ENCODE measurements at regions of chr17 and their contacts with region 1.

Region 1: GRCh38 chr17:60525685-60526514 is at the start of gene APPBP2:
- DNase-seq: peak; percentile 88 to 90
- H3K4me3 ChIP-seq: peak within 1 kb of the TSS; percentile 87
- H3K4me3 Mint-ChIP-seq: peak within 1 kb of the TSS; percentile 96
- H3K27ac Mint-ChIP-seq: peak within 1 kb of the TSS; percentile 96
- H3K4me1 ChIP-seq: peaks cover 11% of the 10 kb centered on the region
- H3K4me1 Mint-ChIP-seq: no peaks in the 10 kb centered on the region
- H3K27me3 ChIP-seq: no peaks in the 10 kb centered on the region
- H3K27me3 Mint-ChIP-seq: no peaks in the 10 kb centered on the region
- CTCF ChIP-seq: no peak
- total RNA-seq, gene APPBP2: 25.3 and 29.8 TPM in 2 replicates

Region 2: GRCh38 chr17:60579090-60579489 is 53.2 kb after region 1 on chr17:
- CTCF ChIA-PET with region 1: no interaction called
- POLR2A ChIA-PET with region 1: no interaction called
- intact Hi-C with region 1: no loop called
- DNase-seq: no peak
- H3K4me3 ChIP-seq: no peak overlapping the region
- H3K4me3 Mint-ChIP-seq: no peak overlapping the region
- H3K27ac Mint-ChIP-seq: no peak overlapping the region
- H3K4me1 ChIP-seq: 0 out of 2 replicates have a peak, but pooled peaks cover under 1% of the 10 kb centered on the region
- H3K4me1 Mint-ChIP-seq: no peaks in the 10 kb centered on the region
- H3K27me3 ChIP-seq: no peaks in the 10 kb centered on the region
- H3K27me3 Mint-ChIP-seq: no peaks in the 10 kb centered on the region
- CTCF ChIP-seq: no peak

Region 3: GRCh38 chr17:60641810-60642220 is 115.9 kb after region 1 on chr17:
- CTCF ChIA-PET with region 1: interaction called, 13 read pairs
- POLR2A ChIA-PET with region 1: no interaction called
- intact Hi-C with region 1: no loop called
- DNase-seq: peak; percentile 76 to 79
- H3K4me3 ChIP-seq: no peak overlapping the region
- H3K4me3 Mint-ChIP-seq: no peak overlapping the region
- H3K27ac Mint-ChIP-seq: no peak overlapping the region
- H3K4me1 ChIP-seq: peaks cover 5% of the 10 kb centered on the region; the same call in 1 of the 2 replicates
- H3K4me1 Mint-ChIP-seq: no peaks in the 10 kb centered on the region
- H3K27me3 ChIP-seq: no peaks in the 10 kb centered on the region
- H3K27me3 Mint-ChIP-seq: no peaks in the 10 kb centered on the region
- CTCF ChIP-seq: peak; percentile 85

Region 4: GRCh38 chr17:60704170-60704569 is 178.3 kb after region 1 on chr17:
- CTCF ChIA-PET with region 1: interaction called, 10 read pairs
- POLR2A ChIA-PET with region 1: no interaction called
- intact Hi-C with region 1: no loop called
- DNase-seq: peak in 1 of 2 experiments; percentile 2
- H3K4me3 ChIP-seq: no peak overlapping the region
- H3K4me3 Mint-ChIP-seq: no peak overlapping the region
- H3K27ac Mint-ChIP-seq: no peak overlapping the region
- H3K4me1 ChIP-seq: peaks cover 7% of the 10 kb centered on the region; the same call in 1 of the 2 replicates
- H3K4me1 Mint-ChIP-seq: peaks cover 8% of the 10 kb centered on the region
- H3K27me3 ChIP-seq: no peaks in the 10 kb centered on the region
- H3K27me3 Mint-ChIP-seq: no peaks in the 10 kb centered on the region
- CTCF ChIP-seq: no peak